ENCODE measurements at regions of chr6 and their contacts with region 1.

Region 1: DNA sequence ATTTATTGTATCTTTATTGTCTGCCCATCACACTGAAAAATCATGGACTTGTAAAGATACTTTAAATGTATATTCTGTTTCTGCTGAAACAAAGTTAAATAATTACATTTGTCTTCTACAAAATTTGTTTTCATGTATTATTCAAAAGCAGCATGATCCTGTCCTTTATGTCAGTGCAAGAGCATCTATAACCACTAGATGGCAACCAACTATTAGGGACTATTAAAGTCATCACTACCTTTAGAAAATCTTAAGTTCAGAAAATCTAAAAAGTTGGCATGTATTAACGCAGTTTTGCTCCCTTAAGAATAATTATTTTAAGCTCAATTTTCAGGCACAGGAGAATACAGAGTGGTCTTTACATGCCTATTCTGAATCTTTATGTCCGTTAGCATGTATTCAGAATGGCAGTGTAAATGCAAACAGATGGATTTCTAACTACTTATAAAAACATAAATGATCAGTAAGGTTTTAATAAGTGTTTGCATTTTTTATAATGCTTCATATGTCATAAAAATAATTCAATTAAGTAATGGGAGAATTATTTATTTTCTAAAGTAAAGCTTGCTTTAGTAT is 17.8 kb downstream of the TMEM30A start:
- DNase-seq: no peak
- H3K4me3 Mint-ChIP-seq: no peak overlapping the region
- H3K27ac Mint-ChIP-seq: no peak overlapping the region
- H3K4me1 Mint-ChIP-seq: peaks cover 38% of the 10 kb centered on the region
- H3K27me3 Mint-ChIP-seq: no peaks in the 10 kb centered on the region

Region 2: GRCh38 chr6:74439123-74439811 is 827.5 kb before region 1 on chr6:
- CTCF ChIA-PET with region 1: no interaction called
- intact Hi-C with region 1: no loop called
- DNase-seq: no peak
- H3K4me3 Mint-ChIP-seq: no peak overlapping the region
- H3K27ac Mint-ChIP-seq: no peak overlapping the region
- H3K4me1 Mint-ChIP-seq: no peaks in the 10 kb centered on the region
- H3K27me3 Mint-ChIP-seq: no peaks in the 10 kb centered on the region

Region 3: GRCh38 chr6:75296811-75297779 is 30.3 kb after region 1 on chr6:
- CTCF ChIA-PET with region 1: interaction called, 6 read pairs
- intact Hi-C with region 1: loop called (anchors 1 kb)
- DNase-seq: no peak
- H3K4me3 Mint-ChIP-seq: no peak overlapping the region
- H3K27ac Mint-ChIP-seq: no peak overlapping the region
- H3K4me1 Mint-ChIP-seq: peaks cover 2% of the 10 kb centered on the region
- H3K27me3 Mint-ChIP-seq: no peaks in the 10 kb centered on the region

Measured in activated naive CD4-positive, alpha-beta T cell treated with anti-CD3 and anti-CD28 coated beads for 36 hours (primary cell).